Endothelial cell of umbilical vein (primary cell): ENCODE measurements at regions of chr22 and their contacts with region 1.

Region 1: DNA sequence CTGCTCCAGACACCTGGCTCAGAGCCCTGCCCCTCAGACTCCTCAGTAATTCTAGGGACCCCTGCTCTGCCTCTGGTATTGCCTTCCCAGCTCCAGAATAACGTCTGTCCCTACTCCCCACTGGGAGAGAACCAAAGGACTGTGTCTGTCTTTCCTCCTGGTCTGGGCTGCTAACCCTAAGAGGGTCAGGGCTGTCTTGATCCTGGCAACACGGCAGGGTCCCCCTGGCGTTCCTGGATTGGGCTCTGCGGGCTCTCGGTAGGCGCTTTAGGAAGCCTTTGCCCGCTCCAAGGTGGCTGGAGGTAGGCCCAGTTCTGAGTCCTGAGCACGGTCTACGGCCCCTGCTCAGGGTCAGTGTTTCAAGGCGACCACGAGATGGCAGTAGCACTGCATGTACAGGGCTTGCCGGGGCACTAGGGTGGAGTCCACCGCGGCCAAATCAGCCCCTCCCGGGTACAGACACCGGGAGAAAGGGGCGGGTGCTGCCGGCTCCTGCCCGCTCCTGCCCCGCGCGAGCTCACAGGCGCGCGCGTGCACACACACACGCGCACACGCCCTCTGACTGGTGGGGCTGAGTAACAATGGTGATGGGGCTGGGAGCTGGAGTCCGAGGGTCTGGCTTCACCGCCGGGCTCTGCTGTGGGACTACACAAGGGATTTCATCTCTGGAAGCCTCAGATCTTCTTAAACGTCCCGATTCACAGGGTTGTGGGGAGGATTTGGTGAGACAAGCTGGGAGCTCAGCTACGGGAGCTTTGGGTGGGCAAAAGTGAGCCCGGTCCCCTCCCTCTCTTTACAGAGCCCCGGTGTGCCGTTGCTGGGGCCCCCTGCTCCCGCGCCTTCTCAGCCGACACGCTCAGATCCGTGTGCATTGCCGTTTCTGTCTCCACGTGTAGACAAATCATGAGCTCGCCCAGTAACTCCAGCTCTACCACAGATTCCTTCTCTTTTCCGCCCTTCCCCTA is 30.1 kb upstream of the HMOX1 start:
- DNase-seq: peak; percentile 89
- H3K4me3 ChIP-seq: peak overlapping the region; percentile 56 to 75 (median 59)
- H3K27ac ChIP-seq: peak overlapping the region; percentile 70
- H3K4me1 ChIP-seq: peaks cover 14% of the 10 kb centered on the region
- H3K27me3 ChIP-seq: no peaks in the 10 kb centered on the region
- CTCF ChIP-seq: peak; percentile 79 to 90
- POLR2A ChIP-seq: peak; percentile 75

Region 2: DNA sequence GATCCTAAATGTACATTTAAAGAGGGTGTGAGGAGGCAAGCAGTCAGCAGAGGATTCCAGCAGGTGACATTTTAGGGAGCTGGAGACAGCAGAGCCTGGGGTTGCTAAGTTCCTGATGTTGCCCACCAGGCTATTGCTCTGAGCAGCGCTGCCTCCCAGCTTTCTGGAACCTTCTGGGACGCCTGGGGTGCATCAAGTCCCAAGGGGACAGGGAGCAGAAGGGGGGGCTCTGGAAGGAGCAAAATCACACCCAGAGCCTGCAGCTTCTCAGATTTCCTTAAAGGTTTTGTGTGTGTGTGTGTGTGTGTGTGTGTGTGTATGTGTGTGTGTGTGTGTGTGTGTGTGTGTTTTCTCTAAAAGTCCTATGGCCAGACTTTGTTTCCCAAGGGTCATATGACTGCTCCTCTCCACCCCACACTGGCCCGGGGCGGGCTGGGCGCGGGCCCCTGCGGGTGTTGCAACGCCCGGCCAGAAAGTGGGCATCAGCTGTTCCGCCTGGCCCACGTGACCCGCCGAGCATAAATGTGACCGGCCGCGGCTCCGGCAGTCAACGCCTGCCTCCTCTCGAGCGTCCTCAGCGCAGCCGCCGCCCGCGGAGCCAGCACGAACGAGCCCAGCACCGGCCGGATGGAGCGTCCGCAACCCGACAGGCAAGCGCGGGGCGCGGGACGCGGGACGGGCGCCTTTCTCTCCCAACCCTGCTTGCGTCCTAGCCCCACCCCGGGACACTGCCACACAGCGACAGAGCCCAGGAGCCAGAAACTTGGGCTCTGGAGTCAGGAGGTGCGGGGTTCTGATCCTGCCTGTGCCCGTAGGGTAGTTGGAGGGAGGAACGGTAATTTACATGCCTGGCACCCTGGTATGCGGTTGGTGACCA is 30.0 kb after region 1 on chr22 and contains the start of gene HMOX1:
- CTCF ChIA-PET with region 1: interaction called, 32 read pairs
- POLR2A ChIA-PET with region 1: interaction called, 4 read pairs
- dilution Hi-C with region 1: no loop called
- intact Hi-C with region 1: loop called (anchors 1 kb)
- DNase-seq: peak; percentile 86
- H3K4me3 ChIP-seq: peak within 1 kb of the TSS; percentile 59 to 84 (median 82)
- H3K27ac ChIP-seq: peak within 1 kb of the TSS; percentile 57
- H3K4me1 ChIP-seq: peaks cover 34% of the 10 kb centered on the region
- H3K27me3 ChIP-seq: no peaks in the 10 kb centered on the region
- CTCF ChIP-seq: peak in 1 of 2 donors; percentile 14
- POLR2A ChIP-seq: peak; percentile 92
- total RNA-seq, gene HMOX1: 29.2 and 41.1 TPM in 2 replicates

Region 3: GRCh38 chr22:35524966-35525686 is 174.3 kb after region 1 on chr22:
- CTCF ChIA-PET with region 1: no interaction called
- POLR2A ChIA-PET with region 1: no interaction called
- dilution Hi-C with region 1: no loop called
- intact Hi-C with region 1: no loop called
- DNase-seq: no peak
- H3K4me3 ChIP-seq: no peak overlapping the region
- H3K27ac ChIP-seq: no peak overlapping the region
- H3K4me1 ChIP-seq: peaks cover 4% of the 10 kb centered on the region
- H3K27me3 ChIP-seq: peaks cover 0 to 6% of the 10 kb centered on the region in 2 experiments
- CTCF ChIP-seq: no peak
- POLR2A ChIP-seq: no peak

Region 4: GRCh38 chr22:35582861-35583670 is 232.2 kb after region 1 on chr22:
- CTCF ChIA-PET with region 1: interaction called, 41 read pairs
- POLR2A ChIA-PET with region 1: no interaction called
- dilution Hi-C with region 1: no loop called
- intact Hi-C with region 1: loop called (anchors 1 kb)
- DNase-seq: peak; percentile 63
- H3K4me3 ChIP-seq: no peak overlapping the region
- H3K27ac ChIP-seq: no peak overlapping the region
- H3K4me1 ChIP-seq: no peaks in the 10 kb centered on the region
- H3K27me3 ChIP-seq: peaks cover 0 to 2% of the 10 kb centered on the region in 2 experiments
- CTCF ChIP-seq: peak; percentile 89
- POLR2A ChIP-seq: no peak

Region 5: GRCh38 chr22:35627264-35628041 is 276.6 kb after region 1 on chr22:
- CTCF ChIA-PET with region 1: interaction called, 3 read pairs
- POLR2A ChIA-PET with region 1: no interaction called
- dilution Hi-C with region 1: no loop called
- intact Hi-C with region 1: loop called (anchors 1 kb)
- DNase-seq: peak; percentile 76
- H3K4me3 ChIP-seq: peak overlapping the region; percentile 27 to 58 (median 51)
- H3K27ac ChIP-seq: peak overlapping the region; percentile 30
- H3K4me1 ChIP-seq: peaks cover 8% of the 10 kb centered on the region
- H3K27me3 ChIP-seq: no peaks in the 10 kb centered on the region
- CTCF ChIP-seq: peak; percentile 48 to 54
- POLR2A ChIP-seq: peak; percentile 21

Region 6: GRCh38 chr22:35648066-35649025 is 297.5 kb after region 1 on chr22 and contains the start of gene APOL6:
- CTCF ChIA-PET with region 1: no interaction called
- POLR2A ChIA-PET with region 1: no interaction called
- dilution Hi-C with region 1: no loop called
- intact Hi-C with region 1: no loop called
- DNase-seq: peak; percentile 50
- H3K4me3 ChIP-seq: peak within 1 kb of the TSS; percentile 41 to 59 (median 50)
- H3K27ac ChIP-seq: peak within 1 kb of the TSS; percentile 5
- H3K4me1 ChIP-seq: peaks cover 8% of the 10 kb centered on the region
- H3K27me3 ChIP-seq: no peaks in the 10 kb centered on the region
- CTCF ChIP-seq: no peak
- POLR2A ChIP-seq: no peak
- total RNA-seq, gene APOL6: 1.3 and 3.0 TPM in 2 replicates

Region 7: GRCh38 chr22:36123673-36124630 is 773.1 kb after region 1 on chr22:
- CTCF ChIA-PET with region 1: interaction called, 12 read pairs
- POLR2A ChIA-PET with region 1: no interaction called
- dilution Hi-C with region 1: no loop called
- intact Hi-C with region 1: loop called (anchors 1 kb)
- DNase-seq: peak; percentile 96
- H3K4me3 ChIP-seq: no peak overlapping the region
- H3K27ac ChIP-seq: peak overlapping the region; percentile 18
- H3K4me1 ChIP-seq: no peaks in the 10 kb centered on the region
- H3K27me3 ChIP-seq: no peaks in the 10 kb centered on the region
- CTCF ChIP-seq: peak; percentile 98 to 99
- POLR2A ChIP-seq: no peak